ENCODE measurements at regions of chr9 and their contacts with region 1.

Region 1: GRCh38 chr9:130235897-130236668 is 29.5 kb upstream of the HMCN2 start:
- DNase-seq: peak; percentile 83
- ATAC-seq: peak; percentile 68

Region 2: DNA sequence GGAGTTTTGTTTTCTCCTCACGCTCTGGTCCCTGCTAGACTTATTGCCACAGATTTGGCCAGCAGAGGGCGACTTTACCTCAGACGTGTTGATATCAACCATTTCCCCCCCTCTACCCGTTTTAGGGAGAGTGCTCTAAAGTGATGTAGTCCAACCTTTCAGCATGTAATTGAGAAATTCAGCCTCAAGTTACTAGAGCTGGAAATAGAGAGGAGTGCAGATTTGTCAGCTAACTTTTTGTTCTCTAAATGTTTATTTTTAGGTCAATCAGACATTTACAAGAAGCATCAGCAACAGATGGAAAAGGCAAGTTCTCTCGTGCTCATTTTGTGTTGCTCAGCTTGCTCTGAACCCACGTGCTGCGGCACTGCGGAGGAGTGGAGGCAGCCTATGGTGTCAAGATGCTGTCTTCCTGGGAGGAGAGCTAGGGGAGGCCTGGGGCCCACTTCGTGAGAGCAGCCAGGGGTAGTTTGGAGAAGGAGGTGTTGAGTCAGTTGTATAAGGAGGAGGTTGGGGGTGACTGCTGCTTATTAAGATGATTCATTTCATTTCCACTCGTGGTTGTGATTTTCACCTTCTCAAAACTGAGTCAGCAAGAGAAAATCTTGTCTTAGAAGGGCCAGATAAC is 128.7 kb before region 1 on chr9:
- intact Hi-C with region 1: loop called (anchors 5 kb)
- DNase-seq: peak; percentile 87
- ATAC-seq: peak; percentile 82

Measured in left ventricle myocardium superior (tissue), 1 donor.